Mammary epithelial cell (primary cell): ENCODE measurements at regions of chr9 and their contacts with region 1.

Region 1: DNA sequence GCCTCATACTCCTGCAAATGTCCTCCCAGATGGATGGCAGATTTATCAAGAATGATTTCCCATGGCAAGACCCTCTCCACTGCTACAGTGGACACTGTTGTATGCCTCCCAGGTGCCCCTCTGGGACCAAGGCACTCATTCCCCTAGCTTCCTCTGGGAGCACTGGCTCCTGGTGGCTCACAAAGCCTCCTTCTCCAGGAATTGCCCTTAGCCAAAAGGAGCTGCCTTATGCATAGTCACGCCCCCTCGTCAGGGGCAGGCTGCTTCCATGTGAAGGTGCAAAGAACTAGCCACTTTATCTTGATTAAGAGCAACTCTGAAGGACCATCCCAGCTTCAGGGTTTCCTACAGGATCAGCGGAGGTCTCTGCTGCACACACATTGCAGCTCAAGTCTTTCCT is 358.1 kb downstream of the CDK5RAP2 start:
- DNase-seq: no peak
- H3K4me3 ChIP-seq: no peak overlapping the region
- H3K27ac ChIP-seq: no peak overlapping the region
- H3K4me1 ChIP-seq: no peaks in the 10 kb centered on the region
- H3K27me3 ChIP-seq: no peaks in the 10 kb centered on the region
- CTCF ChIP-seq: no peak

Region 2: DNA sequence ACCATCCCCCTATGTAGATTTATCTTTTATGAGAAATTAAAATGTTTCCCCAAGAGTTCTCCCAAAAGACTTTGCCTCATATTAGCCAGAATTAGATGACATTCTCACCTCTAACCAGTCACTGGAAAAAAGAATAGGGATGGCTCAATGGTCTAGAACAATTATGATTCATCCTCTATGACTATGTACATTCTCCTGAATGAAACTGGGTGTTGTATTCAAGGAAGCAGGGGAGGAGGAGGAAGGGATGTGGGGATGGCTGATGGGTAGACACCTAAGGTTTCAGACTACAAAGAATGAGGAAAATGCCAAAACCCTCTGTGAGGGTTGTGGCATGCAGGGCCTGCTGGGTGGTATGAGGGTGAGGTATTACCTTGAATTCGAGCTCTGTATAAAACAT is 803.1 kb before region 1 on chr9:
- CTCF ChIA-PET with region 1: interaction called, 14 read pairs
- dilution Hi-C with region 1: no loop called
- in situ Hi-C with region 1: no loop called
- intact Hi-C with region 1: no loop called
- DNase-seq: peak; percentile 14
- H3K4me3 ChIP-seq: no peak overlapping the region
- H3K27ac ChIP-seq: no peak overlapping the region
- H3K4me1 ChIP-seq: no peaks in the 10 kb centered on the region
- H3K27me3 ChIP-seq: no peaks in the 10 kb centered on the region
- CTCF ChIP-seq: no peak

Region 3: GRCh38 chr9:119761737-119762288 is 460.0 kb before region 1 on chr9:
- CTCF ChIA-PET with region 1: no interaction called
- dilution Hi-C with region 1: no loop called
- in situ Hi-C with region 1: no loop called
- intact Hi-C with region 1: no loop called
- DNase-seq: no peak
- H3K4me3 ChIP-seq: no peak overlapping the region
- H3K27ac ChIP-seq: no peak overlapping the region
- H3K4me1 ChIP-seq: no peaks in the 10 kb centered on the region
- H3K27me3 ChIP-seq: no peaks in the 10 kb centered on the region
- CTCF ChIP-seq: no peak

Region 4: DNA sequence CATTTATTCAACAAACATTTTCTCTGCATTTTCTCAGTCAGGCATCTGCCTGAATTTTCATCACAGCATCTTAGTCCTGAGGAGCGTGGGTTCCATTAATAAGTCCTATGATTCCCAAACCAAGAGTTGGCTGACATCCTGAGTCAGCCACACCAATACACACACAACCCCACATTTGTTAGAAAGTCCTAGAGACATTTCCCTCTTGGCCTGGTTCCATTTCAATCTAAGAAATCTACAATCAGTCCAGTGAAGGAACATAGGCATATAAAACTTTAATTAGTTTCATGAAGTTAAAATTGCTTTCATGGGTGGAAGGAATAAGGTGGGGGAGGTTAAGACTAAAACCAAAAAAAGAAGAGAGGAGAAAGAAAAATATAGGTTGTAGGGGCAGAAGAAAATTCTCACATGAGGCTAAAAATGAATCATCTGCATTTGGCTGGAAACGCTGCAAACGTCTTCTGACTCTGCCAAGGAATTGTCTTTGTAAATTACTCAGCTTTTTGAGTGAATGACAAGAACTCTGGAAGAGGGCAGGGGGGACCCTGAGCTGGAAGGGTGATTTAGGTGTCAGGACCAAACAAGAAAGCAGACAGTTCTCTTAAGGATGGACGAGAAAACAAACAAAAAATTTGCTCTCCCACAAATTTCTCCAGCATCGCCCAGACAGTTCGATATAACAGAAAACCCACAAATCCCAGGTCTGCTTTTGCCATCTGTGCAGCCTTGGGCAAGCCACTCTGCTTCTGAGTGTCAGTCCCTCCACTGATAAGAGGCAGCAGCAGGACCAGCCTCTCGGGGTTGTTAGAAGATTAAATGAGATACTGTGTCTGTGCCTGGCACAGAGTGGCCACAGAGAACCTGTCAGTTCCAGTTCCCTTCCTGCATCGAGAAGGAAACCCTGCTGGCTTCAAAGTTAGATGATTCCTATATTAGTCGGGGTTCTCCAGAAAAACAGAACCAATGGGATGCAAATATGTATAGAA is 68.4 kb after region 1 on chr9:
- CTCF ChIA-PET with region 1: no interaction called
- dilution Hi-C with region 1: no loop called
- in situ Hi-C with region 1: loop called in 1 of 2 experiments (anchors 10 kb)
- intact Hi-C with region 1: no loop called
- DNase-seq: peak; percentile 21
- H3K4me3 ChIP-seq: no peak overlapping the region
- H3K27ac ChIP-seq: no peak overlapping the region
- H3K4me1 ChIP-seq: peaks cover 4% of the 10 kb centered on the region
- H3K27me3 ChIP-seq: no peaks in the 10 kb centered on the region
- CTCF ChIP-seq: no peak